Caco-2 (cell line): ENCODE measurements at regions of chr7 and their contacts with region 1.

Region 1: GRCh38 chr7:55120481-55121198 is 101.8 kb downstream of the EGFR start:
- DNase-seq: peak; percentile 52 to 55
- H3K4me3 ChIP-seq: no peak overlapping the region
- H3K4me3 Mint-ChIP-seq: no peak overlapping the region
- H3K27ac Mint-ChIP-seq: peak overlapping the region; percentile 60
- H3K4me1 ChIP-seq: peaks cover 22% of the 10 kb centered on the region
- H3K4me1 Mint-ChIP-seq: peaks cover 13% of the 10 kb centered on the region
- H3K27me3 ChIP-seq: no peaks in the 10 kb centered on the region
- H3K27me3 Mint-ChIP-seq: no peaks in the 10 kb centered on the region
- CTCF ChIP-seq: no peak

Region 2: DNA sequence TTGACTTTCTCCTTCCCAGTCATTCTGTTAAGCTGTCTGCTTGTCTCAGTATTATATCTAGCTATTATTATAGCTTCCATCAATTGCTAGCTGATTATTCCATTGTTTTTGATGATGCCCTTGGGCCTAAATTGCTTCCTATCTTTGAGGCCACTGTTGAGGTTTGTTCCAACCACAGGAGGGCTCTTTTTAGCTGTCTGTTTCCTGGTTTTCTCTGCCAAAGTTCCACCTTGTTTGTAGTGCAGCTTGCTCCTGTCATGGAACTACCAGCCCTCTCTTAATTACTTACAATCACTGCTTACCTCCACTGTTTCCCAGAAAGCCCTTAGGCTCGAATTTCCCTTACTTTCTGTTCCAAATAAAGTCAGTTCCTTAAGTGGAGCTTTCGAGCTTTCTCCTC is 243.0 kb before region 1 on chr7:
- CTCF ChIA-PET with region 1: no interaction called
- POLR2A ChIA-PET with region 1: no interaction called
- intact Hi-C with region 1: loop called (anchors 5 kb)
- DNase-seq: peak in 1 of 2 experiments; percentile 36
- H3K4me3 ChIP-seq: no peak overlapping the region
- H3K4me3 Mint-ChIP-seq: no peak overlapping the region
- H3K27ac Mint-ChIP-seq: peak overlapping the region; percentile 8
- H3K4me1 ChIP-seq: peaks cover 44% of the 10 kb centered on the region
- H3K4me1 Mint-ChIP-seq: peaks cover 30% of the 10 kb centered on the region
- H3K27me3 ChIP-seq: no peaks in the 10 kb centered on the region
- H3K27me3 Mint-ChIP-seq: no peaks in the 10 kb centered on the region
- CTCF ChIP-seq: peak in 1 of 2 experiments; percentile 37

Region 3: GRCh38 chr7:55133630-55134358 is 13.2 kb after region 1 on chr7:
- CTCF ChIA-PET with region 1: interaction called, 3 read pairs
- POLR2A ChIA-PET with region 1: no interaction called
- intact Hi-C with region 1: loop called (anchors 2 kb)
- DNase-seq: no peak
- H3K4me3 ChIP-seq: no peak overlapping the region
- H3K4me3 Mint-ChIP-seq: no peak overlapping the region
- H3K27ac Mint-ChIP-seq: peak overlapping the region; percentile 72
- H3K4me1 ChIP-seq: peaks cover 40% of the 10 kb centered on the region
- H3K4me1 Mint-ChIP-seq: peaks cover 25% of the 10 kb centered on the region
- H3K27me3 ChIP-seq: no peaks in the 10 kb centered on the region
- H3K27me3 Mint-ChIP-seq: no peaks in the 10 kb centered on the region
- CTCF ChIP-seq: no peak

Region 4: GRCh38 chr7:55348499-55348898 is 227.9 kb after region 1 on chr7:
- CTCF ChIA-PET with region 1: no interaction called
- POLR2A ChIA-PET with region 1: no interaction called
- intact Hi-C with region 1: no loop called
- DNase-seq: no peak
- H3K4me3 ChIP-seq: no peak overlapping the region
- H3K4me3 Mint-ChIP-seq: no peak overlapping the region
- H3K27ac Mint-ChIP-seq: no peak overlapping the region
- H3K4me1 ChIP-seq: no peaks in the 10 kb centered on the region
- H3K4me1 Mint-ChIP-seq: no peaks in the 10 kb centered on the region
- H3K27me3 ChIP-seq: no peaks in the 10 kb centered on the region
- H3K27me3 Mint-ChIP-seq: no peaks in the 10 kb centered on the region
- CTCF ChIP-seq: no peak